HCT116 (cell line): ENCODE measurements at regions of chr16 and their contacts with region 1.

Region 1: DNA sequence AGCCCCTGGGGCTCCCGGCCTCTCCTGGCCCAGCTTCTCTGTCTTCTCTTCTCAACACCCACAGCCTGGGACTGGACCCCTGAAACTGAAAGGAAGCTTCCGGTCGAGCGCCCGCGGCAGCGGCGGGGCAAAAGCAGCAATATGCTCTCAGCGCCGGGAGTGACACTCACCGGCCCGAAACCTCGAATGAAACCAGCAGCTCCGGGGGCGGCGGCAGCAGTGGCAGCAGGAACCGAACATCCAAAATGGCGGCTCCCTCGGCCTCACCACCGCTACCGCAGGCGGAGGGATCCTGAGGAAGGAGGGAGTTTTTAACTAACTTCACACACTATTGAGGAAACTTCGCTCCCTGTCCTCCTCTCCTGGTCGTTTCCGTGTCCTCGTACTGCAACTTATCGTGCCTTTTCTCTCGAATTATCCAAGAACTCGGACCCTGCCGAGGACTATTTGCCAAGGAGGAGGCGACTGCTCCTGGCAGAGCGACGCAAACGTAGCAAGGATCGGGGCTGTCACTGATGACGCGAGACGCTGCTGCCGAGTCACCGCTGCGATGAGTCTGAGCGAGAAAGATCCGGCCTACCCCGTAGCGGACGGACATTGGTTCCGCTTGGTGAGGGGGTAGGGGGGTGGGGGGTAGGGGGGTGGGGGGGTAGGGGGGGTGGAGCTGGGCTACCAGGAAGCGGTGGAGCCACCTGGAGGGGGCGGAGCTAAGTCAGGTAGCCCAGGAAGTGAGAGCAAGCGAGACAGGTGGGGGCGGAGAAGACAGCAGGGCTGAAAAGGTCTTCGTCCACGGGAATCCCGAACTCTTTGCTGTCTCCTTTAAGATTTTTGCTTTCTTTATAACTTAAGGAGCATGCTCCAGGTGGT is at the start of gene AP1G1:
- DNase-seq: peak; percentile 99
- ATAC-seq: peak; percentile 95
- H3K4me3 ChIP-seq: peak within 1 kb of the TSS; percentile 98 to 99
- H3K27ac ChIP-seq: peak within 1 kb of the TSS; percentile 95
- H3K4me1 ChIP-seq: peaks cover 9 to 19% of the 10 kb centered on the region in 2 experiments
- H3K27me3 ChIP-seq: no peaks in the 10 kb centered on the region
- CTCF ChIP-seq: no peak
- POLR2A ChIP-seq: peak; percentile 86
- RAD21 ChIP-seq: no peak
- total RNA-seq, gene AP1G1: 70.2 TPM

Region 2: DNA sequence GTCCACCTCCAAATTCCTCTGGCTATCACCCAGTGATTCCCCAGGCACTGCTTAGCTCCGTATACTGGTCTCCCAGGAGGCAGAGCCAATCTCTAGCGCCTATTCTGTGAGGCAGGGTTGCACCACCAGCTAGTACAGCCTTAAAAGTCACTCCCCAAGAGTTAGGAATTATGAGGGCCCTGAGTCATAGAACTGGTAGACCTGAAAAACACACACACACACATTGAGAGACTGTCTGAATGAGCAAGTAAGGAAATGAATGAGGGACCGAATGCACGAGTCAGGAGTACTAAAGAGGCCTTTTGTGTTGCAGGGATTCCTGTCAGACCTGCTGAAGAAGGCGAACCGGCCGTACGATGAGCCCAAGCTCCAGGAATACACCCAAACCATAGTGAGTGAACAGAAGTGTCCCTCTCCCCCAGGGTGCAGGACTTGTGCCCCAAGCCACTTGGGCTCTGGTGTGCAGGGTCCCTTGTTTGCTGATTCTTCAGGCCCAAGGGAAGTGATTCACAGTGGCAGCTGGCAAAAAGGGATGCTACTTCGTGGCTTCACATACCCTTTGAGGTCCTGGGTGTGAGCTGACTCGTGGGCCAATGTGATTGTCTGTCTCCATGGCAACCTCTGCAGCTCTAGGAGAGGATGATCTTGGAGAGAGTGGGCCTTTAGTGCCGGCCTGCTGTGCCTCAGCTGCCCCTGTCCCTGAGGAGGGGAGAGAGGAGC is 425.6 kb before region 1 on chr16:
- CTCF ChIA-PET with region 1: no interaction called
- POLR2A ChIA-PET with region 1: no interaction called
- RAD21 ChIA-PET with region 1: no interaction called
- intact Hi-C with region 1: no loop called
- DNase-seq: no peak
- ATAC-seq: peak; percentile 38; the same call in 1 of the 2 replicates
- H3K4me3 ChIP-seq: no peak overlapping the region
- H3K27ac ChIP-seq: no peak overlapping the region
- H3K4me1 ChIP-seq: no peaks in the 10 kb centered on the region
- H3K27me3 ChIP-seq: peaks cover 7% of the 10 kb centered on the region; the same call in 1 of the 2 replicates
- CTCF ChIP-seq: no peak
- POLR2A ChIP-seq: no peak
- RAD21 ChIP-seq: no peak

Region 3: GRCh38 chr16:71845639-71846430 is 37.0 kb after region 1 on chr16 and contains the start of gene ATXN1L:
- CTCF ChIA-PET with region 1: no interaction called
- POLR2A ChIA-PET with region 1: interaction called, 5 read pairs
- RAD21 ChIA-PET with region 1: no interaction called
- intact Hi-C with region 1: loop called (anchors 2 kb)
- DNase-seq: peak; percentile 81
- ATAC-seq: peak; percentile 96
- H3K4me3 ChIP-seq: peak within 1 kb of the TSS; percentile 88 to 94
- H3K27ac ChIP-seq: peak within 1 kb of the TSS; percentile 50
- H3K4me1 ChIP-seq: peaks cover 6 to 23% of the 10 kb centered on the region in 2 experiments
- H3K27me3 ChIP-seq: no peaks in the 10 kb centered on the region
- CTCF ChIP-seq: no peak
- POLR2A ChIP-seq: peak; percentile 43
- RAD21 ChIP-seq: no peak
- total RNA-seq, gene ATXN1L: 20.5 TPM

Region 4: GRCh38 chr16:71894921-71895678 is 86.3 kb after region 1 on chr16 and contains the start of gene IST1:
- CTCF ChIA-PET with region 1: no interaction called
- POLR2A ChIA-PET with region 1: interaction called, 9 read pairs
- RAD21 ChIA-PET with region 1: no interaction called
- intact Hi-C with region 1: loop called (anchors 2 kb)
- DNase-seq: peak; percentile 96
- ATAC-seq: peak; percentile 84
- H3K4me3 ChIP-seq: peak within 1 kb of the TSS; percentile 96 to 97
- H3K27ac ChIP-seq: peak within 1 kb of the TSS; percentile 94
- H3K4me1 ChIP-seq: peaks cover 24 to 28% of the 10 kb centered on the region in 2 experiments
- H3K27me3 ChIP-seq: no peaks in the 10 kb centered on the region
- CTCF ChIP-seq: no peak
- POLR2A ChIP-seq: peak; percentile 44
- RAD21 ChIP-seq: no peak
- total RNA-seq, gene IST1: 191 TPM